ENCODE measurements at regions of chr3 and their contacts with region 1.

Region 1: GRCh38 chr3:141644931-141645330 is 93.2 kb upstream of the RNF7 start:
- DNase-seq: peak; percentile 96

Region 2: GRCh38 chr3:140863580-140864009 is 781.3 kb before region 1 on chr3:
- intact Hi-C with region 1: no loop called
- DNase-seq: no peak

Region 3: DNA sequence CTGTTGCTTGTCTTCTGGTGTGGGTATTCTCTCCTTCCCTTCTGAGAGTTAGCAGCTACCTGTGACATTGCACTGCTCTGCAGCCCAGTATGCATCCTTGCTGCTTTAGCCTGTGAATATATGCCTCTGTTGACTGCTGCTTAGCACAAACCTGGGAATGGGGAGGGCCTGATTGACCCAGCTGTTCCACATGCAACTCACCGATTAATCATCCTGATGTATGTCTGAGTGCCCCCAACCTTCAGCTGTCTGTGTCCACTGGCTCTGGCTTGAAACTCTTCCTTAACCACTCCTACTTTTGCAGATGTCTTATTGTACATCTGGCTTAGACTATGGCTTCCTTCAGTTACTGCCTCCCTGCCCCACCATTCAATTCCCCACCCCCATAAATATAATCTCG is 39.0 kb before region 1 on chr3:
- intact Hi-C with region 1: no loop called
- DNase-seq: no peak

Region 4: DNA sequence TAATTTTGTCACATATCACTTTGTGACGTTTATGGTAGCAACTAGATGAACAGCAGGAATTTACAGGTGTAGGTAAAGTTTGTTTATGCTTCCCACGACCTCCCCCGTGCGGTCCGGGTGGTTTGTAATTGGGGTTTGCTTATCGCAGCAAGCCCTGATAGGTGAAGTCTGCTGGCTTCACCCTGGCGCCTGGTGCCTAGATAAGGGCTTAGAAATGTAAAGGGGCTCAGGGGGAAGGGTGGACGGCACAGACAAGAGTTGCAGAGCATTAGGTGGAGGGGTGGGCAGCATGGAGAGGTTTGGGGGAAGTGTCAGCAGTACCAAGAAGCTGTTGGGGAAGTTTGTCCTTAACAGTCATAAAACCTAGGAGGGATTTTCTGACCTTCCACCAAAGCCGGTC is 15.0 kb before region 1 on chr3:
- intact Hi-C with region 1: loop called in 1 of 2 experiments (anchors 1 kb)
- DNase-seq: no peak

Region 5: GRCh38 chr3:141992512-141992911 is 347.6 kb after region 1 on chr3:
- intact Hi-C with region 1: loop called in 1 of 2 experiments (anchors 2 kb)
- DNase-seq: no peak